CD4-positive, alpha-beta memory T cell (primary cell): ENCODE measurements at regions of chr17 and their contacts with region 1.

Region 1: GRCh38 chr17:45197555-45198334 is 23.9 kb upstream of the FMNL1 start:
- DNase-seq: peak; percentile 74 to 84 (median 76)
- H3K4me3 ChIP-seq: no peak overlapping the region
- H3K4me3 Mint-ChIP-seq: no peak overlapping the region
- H3K27ac ChIP-seq: no peak overlapping the region
- H3K27ac Mint-ChIP-seq: no peak overlapping the region
- H3K4me1 ChIP-seq: no peaks in the 10 kb centered on the region
- H3K4me1 Mint-ChIP-seq: peaks cover 0 to 4% (median 2%) of the 10 kb centered on the region in 4 donors
- H3K27me3 ChIP-seq: no peaks in the 10 kb centered on the region
- H3K27me3 Mint-ChIP-seq: no peaks in the 10 kb centered on the region

Region 2: DNA sequence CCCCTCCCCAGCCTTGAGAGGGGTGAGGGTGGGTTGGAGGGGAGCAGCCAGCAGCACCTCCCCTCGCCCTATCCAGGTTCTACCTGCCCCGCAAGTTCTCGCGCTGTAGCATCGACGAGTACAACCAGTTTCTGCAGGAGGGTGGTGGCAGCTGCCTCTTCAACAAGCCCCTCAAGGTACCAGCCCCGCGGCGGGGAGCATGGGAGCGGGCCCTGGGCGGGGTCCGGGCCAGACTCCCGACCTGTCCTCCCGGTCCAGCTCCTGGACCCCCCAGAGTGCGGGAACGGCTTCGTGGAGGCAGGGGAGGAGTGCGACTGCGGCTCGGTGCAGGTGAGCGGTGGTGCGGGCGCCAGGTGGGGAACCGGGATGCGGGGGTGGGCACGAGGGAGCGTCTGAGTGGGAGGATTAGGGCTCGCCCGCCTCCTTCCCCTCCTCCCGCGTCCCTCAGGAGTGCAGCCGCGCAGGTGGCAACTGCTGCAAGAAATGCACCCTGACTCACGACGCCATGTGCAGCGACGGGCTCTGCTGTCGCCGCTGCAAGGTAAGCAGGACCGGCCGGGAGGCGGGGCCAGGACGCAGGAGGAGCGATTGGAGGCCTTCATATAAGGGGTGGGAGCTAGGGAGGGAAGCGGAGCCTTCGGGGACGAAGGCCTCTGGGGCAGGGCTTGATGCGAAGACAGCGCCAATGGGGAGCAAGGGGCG is 422.5 kb before region 1 on chr17:
- CTCF ChIA-PET with region 1: interaction called, 3 read pairs
- POLR2A ChIA-PET with region 1: no interaction called
- intact Hi-C with region 1: loop called (anchors 5 kb)
- DNase-seq: peak; percentile 94 to 99 (median 96)
- H3K4me3 ChIP-seq: peak overlapping the region; percentile 57 to 73
- H3K4me3 Mint-ChIP-seq: peak overlapping the region; percentile 88 to 97 (median 90)
- H3K27ac ChIP-seq: peak overlapping the region; percentile 30
- H3K27ac Mint-ChIP-seq: peak overlapping the region; percentile 72 to 89 (median 84)
- H3K4me1 ChIP-seq: peaks cover 18% of the 10 kb centered on the region
- H3K4me1 Mint-ChIP-seq: peaks cover 5 to 21% (median 9%) of the 10 kb centered on the region in 4 donors
- H3K27me3 ChIP-seq: no peaks in the 10 kb centered on the region
- H3K27me3 Mint-ChIP-seq: peaks cover 4 to 8% of the 10 kb centered on the region in 2 donors

Region 3: DNA sequence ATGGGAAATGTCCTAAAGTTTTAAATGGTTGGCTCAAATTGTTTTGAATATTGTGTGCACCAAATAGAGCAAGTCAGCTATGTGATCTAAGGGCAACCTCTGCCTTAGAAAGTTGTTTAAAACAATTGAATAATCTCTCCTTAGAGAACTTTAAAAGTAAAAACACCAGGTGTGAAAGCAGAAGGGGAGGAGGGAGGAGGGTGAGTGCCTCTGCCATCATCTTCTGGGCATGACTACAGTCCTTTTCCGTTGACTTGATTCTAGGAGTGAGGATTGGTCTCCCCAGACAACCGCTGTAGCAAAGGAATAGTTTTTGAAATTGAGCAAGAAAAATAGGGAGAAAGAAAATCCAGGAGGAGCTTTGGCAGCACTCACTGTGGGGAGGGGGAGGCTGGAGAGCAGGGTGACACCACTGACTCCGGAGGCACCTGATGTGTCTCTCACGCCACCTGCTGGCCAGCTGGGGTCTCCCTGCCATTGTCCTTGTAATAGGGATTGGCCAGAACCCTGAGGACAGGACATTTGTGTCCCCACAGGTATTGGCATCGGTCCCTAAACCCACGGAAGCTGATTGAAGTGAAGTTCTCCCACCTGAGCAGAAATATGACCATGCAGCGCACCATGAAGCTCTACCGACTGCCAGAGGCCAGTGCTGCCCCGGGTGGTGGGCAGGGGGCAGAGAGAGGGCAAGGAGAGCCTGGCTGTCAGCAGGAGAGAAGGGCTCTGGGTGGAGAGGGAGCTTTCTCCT is 98.7 kb before region 1 on chr17:
- CTCF ChIA-PET with region 1: interaction called, 10 read pairs
- POLR2A ChIA-PET with region 1: no interaction called
- intact Hi-C with region 1: no loop called
- DNase-seq: peak; percentile 58 to 76 (median 67)
- H3K4me3 ChIP-seq: no peak overlapping the region
- H3K4me3 Mint-ChIP-seq: no peak overlapping the region
- H3K27ac ChIP-seq: no peak overlapping the region
- H3K27ac Mint-ChIP-seq: peak overlapping the region in 3 of 7 donors; percentile 59 to 66 (median 66)
- H3K4me1 ChIP-seq: no peaks in the 10 kb centered on the region
- H3K4me1 Mint-ChIP-seq: no peaks in the 10 kb centered on the region
- H3K27me3 ChIP-seq: no peaks in the 10 kb centered on the region
- H3K27me3 Mint-ChIP-seq: no peaks in the 10 kb centered on the region

Region 4: GRCh38 chr17:45155029-45155428 is 42.7 kb before region 1 on chr17:
- CTCF ChIA-PET with region 1: interaction called, 158 read pairs
- POLR2A ChIA-PET with region 1: interaction called, 63 read pairs
- intact Hi-C with region 1: loop called (anchors 1 kb)
- DNase-seq: no peak
- H3K4me3 ChIP-seq: no peak overlapping the region
- H3K4me3 Mint-ChIP-seq: no peak overlapping the region
- H3K27ac ChIP-seq: peak overlapping the region; percentile 2
- H3K27ac Mint-ChIP-seq: peak overlapping the region in 1 of 7 donors; percentile 11
- H3K4me1 ChIP-seq: peaks cover 54% of the 10 kb centered on the region
- H3K4me1 Mint-ChIP-seq: peaks cover 31 to 54% (median 42%) of the 10 kb centered on the region in 4 donors
- H3K27me3 ChIP-seq: no peaks in the 10 kb centered on the region
- H3K27me3 Mint-ChIP-seq: no peaks in the 10 kb centered on the region

Region 5: DNA sequence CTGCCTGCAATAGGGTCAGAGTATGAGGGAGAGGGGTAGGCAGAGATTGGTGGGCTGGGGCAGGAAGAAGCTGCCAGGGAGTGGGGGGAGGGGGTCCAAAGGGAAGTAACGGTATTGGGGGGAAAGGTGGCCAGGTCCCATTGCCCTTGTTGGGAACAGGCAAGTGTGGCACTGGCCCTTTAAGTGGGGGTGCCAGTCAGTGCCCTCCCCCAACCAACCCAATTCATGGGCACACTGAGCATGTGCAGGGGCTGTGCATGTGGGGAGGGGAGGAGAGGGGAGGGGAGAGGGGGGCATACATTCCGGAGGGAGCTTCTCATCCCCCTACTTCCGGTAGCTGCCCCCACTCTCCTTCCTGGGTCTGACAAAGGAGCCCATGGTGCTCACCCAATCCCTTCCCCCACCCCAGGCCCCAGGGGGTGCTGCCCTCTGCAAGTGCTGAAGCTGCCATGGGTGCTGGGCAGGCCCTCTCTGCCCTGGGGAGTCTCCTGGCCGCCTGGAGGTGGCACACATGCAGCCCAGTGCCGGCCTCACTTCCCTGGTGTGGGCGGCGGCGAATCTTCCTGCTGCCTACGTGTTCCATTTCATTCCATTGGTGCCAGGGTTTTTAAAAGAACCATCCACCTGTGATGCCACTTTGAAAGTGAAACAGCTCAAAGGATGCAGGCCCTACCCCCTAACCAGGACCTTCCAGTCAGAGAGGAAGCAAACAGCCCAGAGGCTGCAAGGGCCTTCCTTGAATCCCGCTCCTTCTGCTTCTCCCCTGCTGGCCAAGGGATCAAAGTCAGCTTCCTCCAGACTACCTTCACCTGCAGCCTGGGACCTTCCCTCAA is 25.1 kb before region 1 on chr17:
- CTCF ChIA-PET with region 1: interaction called, 24 read pairs
- POLR2A ChIA-PET with region 1: interaction called, 5 read pairs
- intact Hi-C with region 1: no loop called
- DNase-seq: peak; percentile 21 to 44 (median 35)
- H3K4me3 ChIP-seq: peak overlapping the region; percentile 11 to 46
- H3K4me3 Mint-ChIP-seq: peak overlapping the region; percentile 69 to 87 (median 79)
- H3K27ac ChIP-seq: peak overlapping the region; percentile 17
- H3K27ac Mint-ChIP-seq: peak overlapping the region; percentile 43 to 91 (median 87)
- H3K4me1 ChIP-seq: peaks cover 16% of the 10 kb centered on the region
- H3K4me1 Mint-ChIP-seq: peaks cover 5 to 17% (median 12%) of the 10 kb centered on the region in 4 donors
- H3K27me3 ChIP-seq: no peaks in the 10 kb centered on the region
- H3K27me3 Mint-ChIP-seq: no peaks in the 10 kb centered on the region